Psoas muscle (tissue), 8 donors: ENCODE measurements at regions of chr15 and their contacts with region 1.

Region 1: DNA sequence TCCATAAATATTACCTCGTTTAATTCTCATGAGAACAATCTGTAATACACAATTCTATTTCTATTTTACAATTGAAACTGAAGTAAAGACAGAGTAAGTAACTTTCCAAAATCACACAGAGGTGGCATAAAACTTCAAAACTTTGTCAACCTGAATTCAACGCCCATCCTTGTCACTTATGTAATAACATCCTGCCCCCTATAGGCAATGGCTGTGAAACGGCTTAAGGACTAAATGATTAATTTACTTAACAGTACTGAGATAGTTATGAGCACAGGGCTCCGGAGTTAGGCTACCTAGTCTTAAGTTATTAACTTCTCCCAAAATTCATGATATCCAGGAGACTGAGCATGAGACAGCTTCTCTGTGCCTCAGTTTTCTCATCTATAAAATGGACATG is 293.1 kb upstream of the CHRM5 start:
- DNase-seq: no peak
- ATAC-seq: no peak
- H3K4me3 ChIP-seq: no peak overlapping the region
- H3K27ac ChIP-seq: no peak overlapping the region
- H3K4me1 ChIP-seq: peaks cover 9% of the 10 kb centered on the region
- H3K27me3 ChIP-seq: no peaks in the 10 kb centered on the region
- CTCF ChIP-seq: peak; percentile 36

Region 2: GRCh38 chr15:33654860-33655259 is 20.4 kb before region 1 on chr15:
- intact Hi-C with region 1: loop called in 1 of 2 experiments (anchors 2 kb)
- DNase-seq: peak in 1 of 2 donors; percentile 25
- ATAC-seq: peak; percentile 54 to 79 (median 70)
- H3K4me3 ChIP-seq: no peak overlapping the region
- H3K27ac ChIP-seq: peak overlapping the region; percentile 50
- H3K4me1 ChIP-seq: no peaks in the 10 kb centered on the region
- H3K27me3 ChIP-seq: no peaks in the 10 kb centered on the region
- CTCF ChIP-seq: no peak

Region 3: DNA sequence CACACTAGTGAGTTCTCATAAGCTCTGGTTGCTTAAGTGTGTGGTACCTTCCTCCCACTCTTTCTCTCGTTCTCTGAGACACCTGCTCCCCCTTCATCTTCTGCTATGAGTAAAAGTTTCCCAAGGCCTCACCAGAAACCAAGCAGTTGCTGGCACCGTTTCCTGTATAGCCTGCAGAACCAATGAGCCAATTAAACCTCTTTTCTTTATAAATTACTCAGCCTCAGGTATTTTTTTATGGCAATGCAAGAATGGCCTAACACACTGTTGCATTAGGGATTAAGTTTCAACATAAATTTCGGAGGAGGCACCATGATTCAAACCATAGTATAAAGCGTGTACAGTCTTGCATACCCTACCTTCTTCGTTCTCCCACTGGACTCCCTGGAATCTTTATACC is 40.8 kb after region 1 on chr15:
- intact Hi-C with region 1: no loop called
- DNase-seq: no peak
- ATAC-seq: no peak
- H3K4me3 ChIP-seq: no peak overlapping the region
- H3K27ac ChIP-seq: no peak overlapping the region
- H3K4me1 ChIP-seq: no peaks in the 10 kb centered on the region
- H3K27me3 ChIP-seq: no peaks in the 10 kb centered on the region
- CTCF ChIP-seq: no peak

Region 4: DNA sequence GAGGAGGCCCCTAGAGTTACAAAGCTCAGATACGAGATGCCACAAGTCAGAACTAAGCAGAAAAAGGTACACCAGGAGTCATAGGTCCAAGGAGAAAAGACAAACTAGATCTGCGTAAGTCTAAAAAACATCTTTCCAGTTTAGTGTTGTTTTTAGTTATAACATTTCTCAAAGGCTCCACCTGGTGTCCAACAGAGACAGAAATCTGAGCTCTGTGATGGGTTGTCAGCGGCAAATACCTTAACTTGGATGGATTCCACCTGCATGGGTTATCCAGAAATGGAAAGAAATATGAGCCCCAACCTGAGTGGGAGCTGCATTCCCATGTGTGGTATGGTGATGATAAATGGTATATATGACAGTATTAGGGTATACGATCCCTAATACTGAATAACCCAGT is 54.4 kb after region 1 on chr15:
- intact Hi-C with region 1: loop called in 1 of 2 experiments (anchors 5 kb)
- DNase-seq: no peak
- ATAC-seq: peak in 1 of 4 donors; percentile 23
- H3K4me3 ChIP-seq: no peak overlapping the region
- H3K27ac ChIP-seq: no peak overlapping the region
- H3K4me1 ChIP-seq: no peaks in the 10 kb centered on the region
- H3K27me3 ChIP-seq: no peaks in the 10 kb centered on the region
- CTCF ChIP-seq: peak; percentile 8